ENCODE measurements at regions of chrX and their contacts with region 1.

Region 1: GRCh38 chrX:68995780-68996551 is 167.1 kb downstream of the EFNB1 start:
- DNase-seq: peak; percentile 62
- H3K4me3 Mint-ChIP-seq: peak overlapping the region; percentile 47
- H3K27ac Mint-ChIP-seq: peak overlapping the region; percentile 17
- H3K4me1 Mint-ChIP-seq: peaks cover 20% of the 10 kb centered on the region
- H3K27me3 Mint-ChIP-seq: peaks cover 37% of the 10 kb centered on the region
- CTCF ChIP-seq: no peak

Region 2: GRCh38 chrX:68945603-68946228 is 50.2 kb before region 1 on chrX:
- CTCF ChIA-PET with region 1: interaction called, 3 read pairs
- POLR2A ChIA-PET with region 1: no interaction called
- intact Hi-C with region 1: loop called (anchors 5 kb)
- DNase-seq: peak; percentile 68
- H3K4me3 Mint-ChIP-seq: no peak overlapping the region
- H3K27ac Mint-ChIP-seq: peak overlapping the region; percentile 36
- H3K4me1 Mint-ChIP-seq: peaks cover 7% of the 10 kb centered on the region
- H3K27me3 Mint-ChIP-seq: peaks cover 82% of the 10 kb centered on the region
- CTCF ChIP-seq: peak; percentile 50

Measured in MCF 10A (cell line).